Sigmoid colon (tissue), 7 donors: ENCODE measurements at regions of chr5 and their contacts with region 1.

Region 1: GRCh38 chr5:55936100-55936693 is 58.6 kb downstream of the IL6ST start:
- DNase-seq: peak; percentile 87
- H3K4me3 ChIP-seq: no peak overlapping the region
- H3K27ac ChIP-seq: no peak overlapping the region
- H3K4me1 ChIP-seq: no peaks in the 10 kb centered on the region
- H3K27me3 ChIP-seq: no peaks in the 10 kb centered on the region
- CTCF ChIP-seq: peak; percentile 52 to 75 (median 64)
- EP300 ChIP-seq: no peak
- POLR2A ChIP-seq: no peak

Region 2: DNA sequence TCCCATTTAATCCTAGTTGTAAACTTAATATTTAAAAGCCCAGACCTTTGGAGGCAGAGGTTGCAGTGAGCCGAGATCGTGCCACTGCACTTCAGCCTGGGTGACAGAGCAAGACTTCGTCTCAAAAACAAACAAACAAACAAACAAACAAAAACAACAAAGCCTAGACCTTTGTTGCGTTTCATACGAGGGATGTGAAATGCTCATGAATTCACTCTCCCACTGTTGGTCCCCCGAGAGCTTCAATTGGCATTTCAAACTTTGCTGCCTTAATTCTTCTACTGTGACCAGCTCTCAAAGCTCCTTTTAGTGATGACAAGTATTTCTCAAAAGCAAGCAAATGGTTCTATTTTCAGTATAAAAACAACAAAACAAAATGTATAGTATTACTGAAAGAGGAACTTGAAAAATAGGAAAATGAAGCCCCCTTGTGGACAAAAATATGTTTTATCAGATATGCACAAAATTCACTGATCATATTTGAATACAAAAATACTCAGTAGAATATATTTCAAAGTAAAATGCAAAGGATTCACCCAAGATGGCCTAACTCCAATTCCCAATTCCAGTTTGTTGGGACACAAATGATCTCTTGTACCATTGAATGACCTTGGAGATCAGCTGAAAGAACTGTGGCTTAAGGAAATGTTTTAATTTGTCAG is 1091.2 kb before region 1 on chr5:
- intact Hi-C with region 1: no loop called
- DNase-seq: no peak
- H3K4me3 ChIP-seq: peak overlapping the region in 3 of 4 donors; percentile 6 to 34 (median 29)
- H3K27ac ChIP-seq: peak overlapping the region in 2 of 4 donors; percentile 29 to 59
- H3K4me1 ChIP-seq: peaks cover 0 to 7% (median 3%) of the 10 kb centered on the region in 4 donors
- H3K27me3 ChIP-seq: no peaks in the 10 kb centered on the region
- CTCF ChIP-seq: peak; percentile 46 to 69 (median 50)
- EP300 ChIP-seq: no peak
- POLR2A ChIP-seq: no peak

Region 3: DNA sequence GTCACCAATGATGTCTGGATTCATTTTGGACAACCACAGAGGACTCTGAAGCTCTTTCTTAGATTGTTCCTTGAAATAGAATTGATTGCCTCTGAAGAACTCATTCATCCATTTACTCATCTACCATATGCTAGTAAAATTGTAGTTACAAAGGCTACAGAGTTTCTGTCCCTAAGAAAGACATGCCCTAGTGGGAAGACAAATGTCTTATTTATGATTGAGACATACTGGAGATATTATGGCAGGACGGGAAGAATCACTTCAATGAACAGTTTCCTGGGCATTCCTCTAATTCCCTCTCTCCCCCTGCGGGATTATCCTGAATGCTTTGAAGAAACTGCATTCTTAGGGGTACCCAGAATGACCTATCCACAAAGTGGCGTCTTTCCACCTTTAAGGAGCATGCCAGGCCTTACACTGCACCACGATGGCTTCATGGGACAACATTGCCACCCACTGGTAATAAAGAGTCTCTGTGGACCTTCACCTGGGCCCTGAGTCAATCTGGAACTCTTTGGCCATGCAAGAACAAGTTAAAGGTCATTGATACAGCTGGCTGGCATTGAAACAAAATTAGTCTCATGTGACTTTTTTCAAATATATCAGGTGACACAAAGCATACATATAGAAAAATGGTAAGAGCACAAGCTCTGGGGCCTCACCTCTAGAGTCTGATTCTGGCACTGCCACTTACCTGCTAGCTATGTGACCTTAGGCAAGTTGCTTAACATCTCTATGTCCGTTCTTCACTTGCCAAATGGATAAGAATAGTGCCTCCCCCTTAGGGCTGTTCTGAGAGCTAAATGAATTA is 264.9 kb after region 1 on chr5:
- intact Hi-C with region 1: loop called (anchors 2 kb)
- DNase-seq: peak; percentile 71
- H3K4me3 ChIP-seq: no peak overlapping the region
- H3K27ac ChIP-seq: no peak overlapping the region
- H3K4me1 ChIP-seq: no peaks in the 10 kb centered on the region
- H3K27me3 ChIP-seq: no peaks in the 10 kb centered on the region
- CTCF ChIP-seq: peak; percentile 39 to 66 (median 48)
- EP300 ChIP-seq: no peak
- POLR2A ChIP-seq: no peak

Region 4: GRCh38 chr5:56286015-56286884 is 350.1 kb after region 1 on chr5:
- intact Hi-C with region 1: no loop called
- DNase-seq: no peak
- H3K4me3 ChIP-seq: no peak overlapping the region
- H3K27ac ChIP-seq: no peak overlapping the region
- H3K4me1 ChIP-seq: peaks cover 0 to 23% (median 7%) of the 10 kb centered on the region in 4 donors
- H3K27me3 ChIP-seq: no peaks in the 10 kb centered on the region
- CTCF ChIP-seq: no peak
- EP300 ChIP-seq: no peak
- POLR2A ChIP-seq: no peak

Region 5: GRCh38 chr5:56358703-56359681 is 422.8 kb after region 1 on chr5:
- intact Hi-C with region 1: no loop called
- DNase-seq: no peak
- H3K4me3 ChIP-seq: no peak overlapping the region
- H3K27ac ChIP-seq: peak overlapping the region in 1 of 4 donors; percentile 23
- H3K4me1 ChIP-seq: peaks cover 0 to 32% (median 17%) of the 10 kb centered on the region in 4 donors
- H3K27me3 ChIP-seq: no peaks in the 10 kb centered on the region
- CTCF ChIP-seq: no peak
- EP300 ChIP-seq: no peak
- POLR2A ChIP-seq: no peak

Region 6: GRCh38 chr5:56610093-56610698 is 674.0 kb after region 1 on chr5:
- intact Hi-C with region 1: loop called (anchors 5 kb)
- DNase-seq: no peak
- H3K4me3 ChIP-seq: no peak overlapping the region
- H3K27ac ChIP-seq: no peak overlapping the region
- H3K4me1 ChIP-seq: peaks cover 0 to 6% (median 3%) of the 10 kb centered on the region in 4 donors
- H3K27me3 ChIP-seq: no peaks in the 10 kb centered on the region
- CTCF ChIP-seq: no peak
- EP300 ChIP-seq: no peak
- POLR2A ChIP-seq: no peak

Region 7: GRCh38 chr5:56838409-56839039 is 902.3 kb after region 1 on chr5:
- intact Hi-C with region 1: loop called (anchors 2 kb)
- DNase-seq: no peak
- H3K4me3 ChIP-seq: peak overlapping the region in 2 of 4 donors; percentile 14 to 20
- H3K27ac ChIP-seq: peak overlapping the region in 3 of 4 donors; percentile 46 to 61 (median 60)
- H3K4me1 ChIP-seq: peaks cover 0 to 28% (median 9%) of the 10 kb centered on the region in 4 donors
- H3K27me3 ChIP-seq: no peaks in the 10 kb centered on the region
- CTCF ChIP-seq: peak; percentile 40 to 57 (median 46)
- EP300 ChIP-seq: no peak
- POLR2A ChIP-seq: no peak